Endothelial cell of umbilical vein (primary cell): ENCODE measurements at regions of chr22 and their contacts with region 1.

Region 1: DNA sequence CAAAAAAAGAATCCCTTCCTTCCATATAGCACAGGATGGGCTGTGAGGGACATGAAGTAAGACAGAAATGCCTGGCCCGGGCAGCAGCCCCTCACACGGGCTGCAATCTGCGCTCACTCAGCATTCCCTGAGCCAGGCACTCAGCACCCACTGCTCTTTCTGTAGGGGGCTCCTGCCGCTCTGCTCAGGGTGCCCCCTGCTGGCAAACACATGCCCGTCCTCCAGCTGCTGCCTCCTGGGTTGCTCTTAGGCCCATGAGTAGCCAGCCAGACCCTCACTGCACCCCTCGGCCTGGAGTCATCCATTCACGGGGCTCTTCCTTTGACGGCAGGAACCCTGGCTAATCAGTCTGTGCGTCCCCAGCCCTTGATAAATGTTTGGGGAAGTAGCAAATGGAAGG is 6.9 kb downstream of the MCAT start:
- DNase-seq: peak; percentile 56
- H3K4me3 ChIP-seq: no peak overlapping the region
- H3K27ac ChIP-seq: no peak overlapping the region
- H3K4me1 ChIP-seq: no peaks in the 10 kb centered on the region
- H3K27me3 ChIP-seq: no peaks in the 10 kb centered on the region
- CTCF ChIP-seq: peak; percentile 76 to 95
- POLR2A ChIP-seq: no peak

Region 2: GRCh38 chr22:43110444-43110926 is 25.8 kb before region 1 on chr22 and contains the start of gene BIK:
- CTCF ChIA-PET with region 1: interaction called, 17 read pairs
- POLR2A ChIA-PET with region 1: no interaction called
- dilution Hi-C with region 1: no loop called
- intact Hi-C with region 1: loop called (anchors 2 kb)
- DNase-seq: peak; percentile 47
- H3K4me3 ChIP-seq: peak within 1 kb of the TSS; percentile 19 to 51 (median 50)
- H3K27ac ChIP-seq: no peak within 1 kb of the TSS
- H3K4me1 ChIP-seq: no peaks in the 10 kb centered on the region
- H3K27me3 ChIP-seq: peaks cover 16 to 26% of the 10 kb centered on the region in 2 experiments
- CTCF ChIP-seq: peak; percentile 19 to 53
- POLR2A ChIP-seq: no peak
- total RNA-seq, gene BIK: 0.49 TPM in 1 of 2 replicates, not detected in the other